AG04449 (cell line): ENCODE measurements at regions of chr2 and their contacts with region 1.

Region 1: DNA sequence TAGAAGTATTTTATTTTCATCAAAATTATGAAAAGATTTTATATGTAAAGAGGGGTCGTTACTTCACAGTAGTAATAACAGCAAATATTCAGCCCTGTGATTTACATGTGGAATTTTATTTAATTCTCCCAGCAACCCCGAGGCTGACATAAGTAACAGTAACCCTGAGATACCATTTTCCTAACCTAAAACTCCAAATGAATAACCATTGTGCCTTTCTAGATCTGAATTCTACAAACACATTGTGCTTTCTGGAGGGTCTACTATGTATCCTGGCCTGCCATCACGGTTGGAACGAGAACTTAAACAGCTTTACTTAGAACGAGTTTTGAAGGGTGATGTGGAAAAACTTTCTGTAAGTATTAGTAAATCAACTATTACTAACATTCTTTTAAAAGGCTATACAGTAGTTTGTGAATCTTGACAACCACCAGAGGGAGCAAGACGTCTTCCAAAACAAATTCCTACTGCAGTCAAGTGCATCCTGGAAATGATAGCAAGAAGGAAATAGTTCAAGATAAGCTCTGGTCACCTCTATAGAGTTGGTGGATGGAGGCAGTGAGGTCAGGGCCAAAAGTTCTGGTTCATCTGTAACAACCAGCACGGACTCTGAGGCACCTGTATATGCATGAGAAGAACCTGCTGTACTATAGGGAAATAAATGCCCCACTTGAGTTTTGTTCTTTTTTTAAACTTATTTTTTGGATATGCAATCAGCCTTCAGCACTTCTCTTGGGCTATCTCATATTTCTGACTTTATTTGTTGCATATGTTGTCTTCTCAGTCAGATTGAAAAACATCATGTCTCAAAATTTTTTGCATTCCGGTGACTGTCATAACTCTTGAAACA is 37.4 kb downstream of the ACTR2 start:
- DNase-seq: peak; percentile 58
- H3K4me3 ChIP-seq: no peak overlapping the region
- CTCF ChIP-seq: peak; percentile 53

Region 2: GRCh38 chr2:65278531-65278981 is 13.5 kb after region 1 on chr2:
- CTCF ChIA-PET with region 1: interaction called, 56 read pairs
- POLR2A ChIA-PET with region 1: no interaction called
- DNase-seq: no peak
- H3K4me3 ChIP-seq: no peak overlapping the region
- CTCF ChIP-seq: no peak

Region 3: GRCh38 chr2:65436169-65436823 is 171.2 kb after region 1 on chr2:
- CTCF ChIA-PET with region 1: interaction called, 22 read pairs
- POLR2A ChIA-PET with region 1: interaction called, 4 read pairs
- DNase-seq: peak; percentile 81
- H3K4me3 ChIP-seq: peak overlapping the region; percentile 66
- CTCF ChIP-seq: no peak

Region 4: DNA sequence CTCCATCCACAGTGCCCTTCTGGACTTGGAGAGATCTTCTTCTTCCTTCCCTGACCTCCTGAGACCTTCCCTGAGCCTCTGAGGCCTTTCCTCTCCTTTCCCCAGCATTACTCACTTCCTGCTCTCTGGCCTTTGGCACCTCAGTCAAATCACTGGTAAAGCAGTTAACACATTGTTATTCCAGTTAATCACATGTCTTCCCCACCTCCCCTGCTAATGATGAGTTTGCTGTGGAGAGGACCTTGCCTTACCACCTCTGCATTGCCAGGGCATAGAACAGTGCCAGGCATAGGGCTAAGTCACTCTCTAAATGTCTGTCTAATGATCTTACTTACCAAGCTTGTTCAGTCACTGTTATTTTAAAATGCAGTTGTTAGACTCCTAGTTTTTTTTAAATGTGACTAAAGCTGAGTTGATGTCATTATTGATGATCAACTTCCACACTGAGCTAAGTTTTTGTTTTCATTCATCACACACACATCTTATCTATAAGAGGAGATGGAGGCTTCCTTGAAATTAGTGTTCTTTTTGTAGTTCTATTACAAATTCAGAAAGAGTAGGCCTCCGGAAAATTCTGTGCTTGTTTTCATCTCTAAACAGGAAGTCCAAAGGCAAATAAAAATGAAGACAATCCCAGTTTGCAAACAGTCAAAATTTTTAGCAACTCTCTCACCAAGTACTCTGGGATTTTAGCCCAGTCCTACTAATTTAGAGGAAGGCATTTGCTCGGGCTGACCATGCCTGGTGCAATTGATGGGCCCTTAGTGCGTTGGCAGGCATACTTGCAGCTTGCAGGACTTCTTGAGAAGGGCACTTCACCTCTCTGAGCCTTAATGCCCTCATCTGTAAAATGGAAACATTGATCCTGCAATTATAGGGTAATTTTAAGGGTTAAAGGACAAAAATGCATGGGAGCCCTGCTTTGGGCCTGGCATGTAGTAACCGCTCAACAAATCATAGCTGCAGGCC is 281.1 kb after region 1 on chr2:
- CTCF ChIA-PET with region 1: interaction called, 37 read pairs
- POLR2A ChIA-PET with region 1: no interaction called
- DNase-seq: no peak
- H3K4me3 ChIP-seq: no peak overlapping the region
- CTCF ChIP-seq: no peak

Region 5: GRCh38 chr2:65554765-65555591 is 289.9 kb after region 1 on chr2:
- CTCF ChIA-PET with region 1: interaction called, 37 read pairs
- POLR2A ChIA-PET with region 1: no interaction called
- DNase-seq: no peak
- H3K4me3 ChIP-seq: no peak overlapping the region
- CTCF ChIP-seq: no peak

Region 6: GRCh38 chr2:65576861-65577601 is 312.0 kb after region 1 on chr2:
- CTCF ChIA-PET with region 1: interaction called, 12 read pairs
- POLR2A ChIA-PET with region 1: no interaction called
- DNase-seq: peak; percentile 68
- H3K4me3 ChIP-seq: peak overlapping the region; percentile 20; the same call in 1 of the 2 replicates
- CTCF ChIP-seq: no peak